ENCODE measurements at regions of chr12 and their contacts with region 1.

Region 1: DNA sequence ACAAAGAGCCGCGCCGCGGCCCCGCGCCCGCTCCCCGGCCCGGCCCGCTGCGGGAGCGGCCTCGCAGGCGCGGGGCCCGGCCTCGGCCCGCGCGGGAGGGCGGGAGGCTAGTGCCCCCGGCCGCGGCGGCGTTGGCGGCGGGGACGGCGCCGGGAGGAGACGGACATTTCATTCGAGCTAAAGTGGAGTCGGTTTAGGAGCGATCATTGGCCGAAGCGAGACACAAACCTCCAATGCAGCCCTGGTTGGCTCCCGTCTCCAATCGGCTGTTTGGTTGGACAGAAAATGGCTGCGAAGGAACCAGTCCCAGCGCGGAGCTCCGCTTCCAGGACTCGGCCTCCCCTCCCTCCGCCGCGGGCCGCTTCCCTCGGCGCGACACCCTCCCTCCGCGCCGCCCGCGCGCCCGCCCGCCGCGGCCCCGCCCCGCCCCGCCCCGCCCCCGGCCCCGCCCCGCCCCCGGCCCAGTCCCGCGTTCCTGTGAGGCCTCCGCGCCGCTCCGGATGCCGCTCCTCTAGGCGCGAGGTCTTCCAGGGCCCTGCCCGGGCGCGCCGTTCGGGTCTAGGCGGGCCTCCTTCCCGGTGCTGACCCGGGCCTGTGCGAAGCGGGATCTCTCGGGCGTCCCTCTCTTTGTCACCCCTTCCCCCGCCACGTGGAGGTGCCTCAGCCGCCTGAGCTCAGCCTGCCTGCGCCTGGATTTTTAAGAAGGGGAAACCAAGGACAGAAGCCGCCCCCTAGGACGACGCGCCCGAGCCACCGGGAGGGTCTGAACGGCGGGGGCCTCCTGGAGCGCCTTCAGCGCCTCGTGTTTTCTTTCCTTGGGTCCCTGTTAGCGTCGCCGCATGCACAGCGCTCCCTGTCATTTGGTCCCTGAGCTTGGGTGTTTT is at the start of gene NFYB:
- DNase-seq: peak; percentile 99
- H3K4me3 Mint-ChIP-seq: peak within 1 kb of the TSS; percentile 78
- H3K27ac Mint-ChIP-seq: peak within 1 kb of the TSS; percentile 46
- H3K4me1 Mint-ChIP-seq: peaks cover 8% of the 10 kb centered on the region
- H3K27me3 Mint-ChIP-seq: no peaks in the 10 kb centered on the region
- CTCF ChIP-seq: no peak
- total RNA-seq, gene NFYB: 24.8 and 27.0 TPM in 2 replicates

Region 2: GRCh38 chr12:104121001-104121400 is 17.2 kb before region 1 on chr12:
- CTCF ChIA-PET with region 1: interaction called, 3 read pairs
- POLR2A ChIA-PET with region 1: interaction called, 13 read pairs
- intact Hi-C with region 1: no loop called
- DNase-seq: no peak
- H3K4me3 Mint-ChIP-seq: no peak overlapping the region
- H3K27ac Mint-ChIP-seq: peak overlapping the region; percentile 16
- H3K4me1 Mint-ChIP-seq: peaks cover 6% of the 10 kb centered on the region
- H3K27me3 Mint-ChIP-seq: no peaks in the 10 kb centered on the region
- CTCF ChIP-seq: no peak

Region 3: GRCh38 chr12:104126548-104126947 is 11.6 kb before region 1 on chr12:
- CTCF ChIA-PET with region 1: interaction called, 3 read pairs
- POLR2A ChIA-PET with region 1: interaction called, 13 read pairs
- intact Hi-C with region 1: no loop called
- DNase-seq: no peak
- H3K4me3 Mint-ChIP-seq: no peak overlapping the region
- H3K27ac Mint-ChIP-seq: peak overlapping the region; percentile 71
- H3K4me1 Mint-ChIP-seq: peaks cover 5% of the 10 kb centered on the region
- H3K27me3 Mint-ChIP-seq: no peaks in the 10 kb centered on the region
- CTCF ChIP-seq: no peak

Measured in MCF 10A (cell line).